Heart left ventricle (tissue), 16 donors: ENCODE measurements at regions of chr12 and their contacts with region 1.

Region 1: DNA sequence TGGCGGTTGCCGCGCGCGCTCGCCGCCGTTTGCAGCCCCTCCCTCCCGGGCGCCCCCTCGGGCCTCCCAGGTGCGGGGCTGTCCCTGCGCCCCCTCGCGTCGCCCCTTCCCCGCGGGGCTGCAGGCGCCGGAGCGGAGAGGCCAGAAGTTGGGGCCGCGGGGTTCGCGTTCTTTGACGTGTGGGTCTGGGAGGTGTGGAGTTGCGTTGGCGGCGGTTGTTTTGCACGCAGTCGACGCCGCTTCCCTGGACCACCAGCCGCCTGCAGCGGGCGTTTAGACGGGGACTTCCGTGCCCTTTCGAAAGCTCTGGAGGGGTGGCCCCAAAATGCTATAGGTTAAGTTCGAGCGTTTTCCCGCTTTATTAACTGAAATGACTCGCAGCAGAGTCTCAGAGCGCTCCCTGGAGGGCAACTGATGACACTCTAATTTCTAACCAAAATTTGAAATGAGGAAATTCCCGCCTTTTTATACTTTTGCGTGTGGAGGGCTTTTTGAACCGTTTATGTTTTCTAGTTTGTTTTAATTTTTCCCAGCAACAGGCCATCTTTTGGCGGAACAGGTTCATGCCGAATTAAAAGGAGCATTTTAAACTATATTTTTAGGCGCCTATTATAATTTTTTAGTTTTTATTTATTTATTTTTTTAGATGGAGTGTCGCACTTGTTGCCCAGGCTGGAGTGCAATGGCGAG is 939 bp downstream of the TMPO start:
- DNase-seq: peak; percentile 60 to 80 (median 76)
- ATAC-seq: peak; percentile 36 to 66 (median 42)
- H3K4me3 ChIP-seq: peak overlapping the region; percentile 65 to 99 (median 96)
- H3K27ac ChIP-seq: peak overlapping the region; percentile 89 to 98 (median 94)
- H3K4me1 ChIP-seq: peaks cover 0 to 52% (median 23%) of the 10 kb centered on the region in 12 donors
- H3K27me3 ChIP-seq: no peaks in the 10 kb centered on the region
- CTCF ChIP-seq: peak; percentile 55 to 90 (median 76)
- POLR2A ChIP-seq: no peak

Region 2: DNA sequence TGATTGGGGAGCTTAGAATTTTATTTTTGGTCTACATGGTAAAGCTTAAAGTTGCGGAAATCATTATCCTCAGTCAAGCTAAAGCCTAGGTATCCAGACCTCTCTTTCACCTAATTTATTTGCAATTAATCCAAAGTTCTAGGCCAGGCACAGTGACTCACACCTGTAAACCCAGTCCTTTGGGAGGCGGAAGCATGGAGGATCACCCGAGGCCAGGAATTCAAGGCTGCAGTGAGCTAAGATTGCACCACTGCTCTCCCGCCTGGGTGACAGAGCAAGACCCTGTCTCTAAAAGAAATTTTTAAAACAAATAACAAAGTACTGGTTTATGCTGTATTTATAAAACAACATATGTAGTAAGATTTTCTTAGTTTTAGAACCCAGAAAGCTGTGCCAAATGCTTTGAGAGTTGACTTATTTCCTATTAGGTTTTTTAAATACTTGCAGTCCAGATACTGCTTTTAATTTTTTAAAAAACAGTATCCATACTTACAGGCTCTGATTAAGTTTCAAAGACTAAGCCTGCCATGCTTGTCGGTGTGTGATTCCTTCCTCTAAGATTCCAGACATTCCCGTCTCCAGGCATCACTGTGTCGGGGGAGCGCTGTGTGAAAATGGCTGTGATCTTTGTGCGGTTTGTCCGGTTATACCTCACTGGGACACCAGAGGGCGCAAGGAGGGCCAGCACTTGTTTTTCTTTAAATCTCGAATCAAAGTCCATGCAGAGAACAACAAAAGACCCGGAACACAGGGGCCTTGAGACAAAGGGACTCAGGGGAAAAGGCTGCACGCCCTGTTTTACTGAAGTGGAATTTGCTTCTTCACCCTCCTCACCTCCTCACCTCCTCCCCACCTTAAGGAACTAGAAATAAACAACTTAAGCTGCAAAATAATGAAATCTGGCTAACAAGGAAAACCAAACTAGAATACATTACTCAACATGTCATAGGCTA is 25.6 kb before region 1 on chr12:
- intact Hi-C with region 1: loop called in 9 of 10 experiments (anchors 1 to 2 kb)
- DNase-seq: peak; percentile 78 to 90 (median 85)
- ATAC-seq: peak; percentile 82 to 93 (median 88)
- H3K4me3 ChIP-seq: peak overlapping the region in 7 of 12 donors; percentile 13 to 40 (median 25)
- H3K27ac ChIP-seq: peak overlapping the region in 11 of 12 donors; percentile 25 to 67 (median 55)
- H3K4me1 ChIP-seq: peaks cover 0 to 11% (median 7%) of the 10 kb centered on the region in 12 donors
- H3K27me3 ChIP-seq: no peaks in the 10 kb centered on the region
- CTCF ChIP-seq: peak; percentile 70 to 94 (median 85)
- POLR2A ChIP-seq: no peak

Region 3: GRCh38 chr12:98593351-98594049 is 77.2 kb after region 1 on chr12 and contains the start of gene SLC25A3:
- intact Hi-C with region 1: loop called in 1 of 10 experiments (anchors 5 kb)
- DNase-seq: peak; percentile 97 to 99 (median 98)
- ATAC-seq: peak; percentile 99
- H3K4me3 ChIP-seq: peak within 1 kb of the TSS; percentile 58 to 98 (median 90)
- H3K27ac ChIP-seq: peak within 1 kb of the TSS; percentile 97 to 100 (median 99)
- H3K4me1 ChIP-seq: peaks cover 0 to 36% (median 23%) of the 10 kb centered on the region in 12 donors
- H3K27me3 ChIP-seq: no peaks in the 10 kb centered on the region
- CTCF ChIP-seq: no peak
- POLR2A ChIP-seq: peak; percentile 81 to 99
- total RNA-seq, gene SLC25A3: 852 to 2,779 (median 1,586) TPM

Region 4: GRCh38 chr12:98696036-98696646 is 179.8 kb after region 1 on chr12:
- intact Hi-C with region 1: no loop called
- DNase-seq: no peak
- ATAC-seq: no peak
- H3K4me3 ChIP-seq: no peak overlapping the region
- H3K27ac ChIP-seq: no peak overlapping the region
- H3K4me1 ChIP-seq: peaks cover 0 to 23% (median 9%) of the 10 kb centered on the region in 12 donors
- H3K27me3 ChIP-seq: no peaks in the 10 kb centered on the region
- CTCF ChIP-seq: no peak
- POLR2A ChIP-seq: no peak